ENCODE measurements at regions of chr1 and their contacts with region 1.

Region 1: GRCh38 chr1:203861379-203862184 is at the start of gene SNRPE:
- DNase-seq: peak; percentile 95
- H3K4me3 ChIP-seq: peak within 1 kb of the TSS; percentile 69 to 79
- H3K27ac ChIP-seq: peak within 1 kb of the TSS; percentile 74 to 76
- H3K4me1 ChIP-seq: peaks cover 4% of the 10 kb centered on the region
- H3K27me3 ChIP-seq: no peaks in the 10 kb centered on the region
- CTCF ChIP-seq: peak; percentile 87 to 99 (median 94)
- POLR2A ChIP-seq: no peak
- total RNA-seq, gene SNRPE: 18.8 to 92.8 TPM

Region 2: DNA sequence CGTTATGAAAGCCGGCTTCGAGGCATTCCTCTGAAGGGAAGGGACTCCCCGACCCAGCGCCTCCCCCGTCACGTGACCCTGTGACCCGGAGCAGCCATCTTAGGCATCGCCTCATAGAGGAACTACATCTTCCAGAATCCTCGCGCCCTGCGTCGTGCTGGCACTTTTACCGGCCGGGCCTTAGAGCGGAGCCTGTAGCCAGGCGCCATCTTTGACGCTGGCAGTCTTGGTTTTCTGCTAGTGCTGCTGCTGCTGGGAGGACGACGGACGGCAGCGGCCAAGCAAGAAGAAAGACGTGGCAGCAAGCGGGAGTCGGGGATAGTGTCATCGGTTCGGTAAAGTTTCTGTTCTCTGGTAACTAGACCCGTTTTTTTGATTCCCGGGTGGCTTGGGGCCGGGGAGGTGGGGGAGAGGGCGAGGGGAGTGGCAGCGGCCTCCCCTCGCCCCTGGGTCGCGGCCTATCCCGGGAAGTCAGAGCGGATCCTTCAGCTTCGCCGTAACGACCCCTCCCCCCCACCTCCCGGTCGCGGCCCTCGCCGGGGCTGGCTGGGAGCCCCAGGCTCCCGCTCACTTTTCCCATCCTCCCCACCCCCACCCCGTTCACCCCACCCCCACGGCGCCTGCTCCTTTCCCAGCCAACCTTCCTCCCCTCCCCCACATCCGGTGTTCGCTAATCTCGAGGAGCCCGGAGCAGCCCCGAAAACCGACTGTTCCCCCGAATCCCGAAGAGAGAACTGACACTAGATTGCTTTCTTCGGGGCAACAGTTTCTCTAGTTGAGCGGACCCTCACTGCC is 65.9 kb before region 1 on chr1 and contains the starts of genes ZBED6 and ZC3H11A:
- intact Hi-C with region 1: no loop called
- DNase-seq: peak; percentile 98
- H3K4me3 ChIP-seq: peak within 1 kb of the TSS; percentile 58 to 83
- H3K27ac ChIP-seq: peak within 1 kb of the TSS; percentile 96 to 99
- H3K4me1 ChIP-seq: peaks cover 8% of the 10 kb centered on the region
- H3K27me3 ChIP-seq: no peaks in the 10 kb centered on the region
- CTCF ChIP-seq: peak in 2 of 4 experiments; percentile 5 to 16
- POLR2A ChIP-seq: peak; percentile 81
- total RNA-seq, gene ZBED6: 5.8 to 27.6 TPM
- total RNA-seq, gene ZC3H11A: 88.3 to 111 TPM

Region 3: DNA sequence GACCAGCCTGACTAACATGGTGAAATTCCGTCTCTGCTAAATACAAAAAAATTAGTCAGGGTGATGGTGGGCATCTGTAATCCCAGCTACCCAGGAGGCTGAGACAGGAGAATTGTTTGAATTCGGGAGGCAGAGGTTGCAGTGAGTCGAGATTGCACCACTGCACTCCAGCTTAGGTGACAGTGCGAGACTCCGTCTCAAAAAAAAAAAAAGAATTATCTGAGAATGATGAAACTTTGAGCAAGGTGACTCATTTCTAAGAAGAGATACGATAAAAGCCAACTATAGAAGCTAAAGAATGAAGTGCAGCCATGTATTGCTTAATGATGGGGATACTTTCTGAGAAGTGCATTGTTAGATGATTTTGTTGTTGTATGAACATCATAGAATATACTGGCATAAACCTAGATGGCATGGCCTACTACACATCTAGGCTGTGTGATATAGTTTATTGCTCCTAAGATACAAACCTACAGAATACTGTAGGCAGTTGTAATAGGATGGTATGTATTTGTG is 64.5 kb after region 1 on chr1:
- intact Hi-C with region 1: no loop called
- DNase-seq: no peak
- H3K4me3 ChIP-seq: no peak overlapping the region
- H3K27ac ChIP-seq: no peak overlapping the region
- H3K4me1 ChIP-seq: no peaks in the 10 kb centered on the region
- H3K27me3 ChIP-seq: no peaks in the 10 kb centered on the region
- CTCF ChIP-seq: no peak
- POLR2A ChIP-seq: no peak

Region 4: GRCh38 chr1:204151552-204152309 is 290.1 kb after region 1 on chr1 and contains the start of gene ETNK2:
- intact Hi-C with region 1: loop called (anchors 5 kb)
- DNase-seq: peak; percentile 51
- H3K4me3 ChIP-seq: peak within 1 kb of the TSS; percentile 54 to 64
- H3K27ac ChIP-seq: peak within 1 kb of the TSS; percentile 83 to 88
- H3K4me1 ChIP-seq: peaks cover 3% of the 10 kb centered on the region
- H3K27me3 ChIP-seq: no peaks in the 10 kb centered on the region
- CTCF ChIP-seq: no peak
- POLR2A ChIP-seq: peak; percentile 27
- total RNA-seq, gene ETNK2: 25.3 to 84.5 TPM

Region 5: DNA sequence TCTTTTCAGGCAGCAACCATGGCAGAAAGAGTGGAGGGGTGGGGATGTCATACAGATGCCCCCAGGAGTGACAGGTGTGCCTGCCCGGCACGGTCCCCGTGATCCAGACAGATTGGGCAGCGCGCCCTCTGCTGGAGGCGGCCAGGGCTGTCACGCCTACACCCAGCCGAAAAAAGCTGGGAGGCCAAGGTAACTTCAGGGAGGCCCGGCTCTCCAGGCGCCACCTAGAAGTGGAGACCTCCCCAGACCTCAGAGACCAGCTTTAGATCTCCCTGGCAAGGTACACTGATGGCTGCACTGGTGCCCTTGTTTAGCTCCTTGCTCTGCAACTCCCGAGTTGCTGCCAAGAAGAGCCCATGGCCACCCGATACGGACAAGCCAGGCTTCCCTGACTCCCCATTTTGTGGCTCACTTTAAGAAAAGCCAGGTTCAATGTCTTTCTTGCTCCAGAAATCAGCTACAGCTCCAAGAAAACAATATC is 345.6 kb after region 1 on chr1:
- intact Hi-C with region 1: loop called (anchors 5 kb)
- DNase-seq: peak; percentile 65
- H3K4me3 ChIP-seq: no peak overlapping the region
- H3K27ac ChIP-seq: no peak overlapping the region
- H3K4me1 ChIP-seq: no peaks in the 10 kb centered on the region
- H3K27me3 ChIP-seq: no peaks in the 10 kb centered on the region
- CTCF ChIP-seq: peak; percentile 75 to 88 (median 81)
- POLR2A ChIP-seq: no peak